CD8-positive, alpha-beta memory T cell (primary cell): ENCODE measurements at regions of chr14 and their contacts with region 1.

Region 1: DNA sequence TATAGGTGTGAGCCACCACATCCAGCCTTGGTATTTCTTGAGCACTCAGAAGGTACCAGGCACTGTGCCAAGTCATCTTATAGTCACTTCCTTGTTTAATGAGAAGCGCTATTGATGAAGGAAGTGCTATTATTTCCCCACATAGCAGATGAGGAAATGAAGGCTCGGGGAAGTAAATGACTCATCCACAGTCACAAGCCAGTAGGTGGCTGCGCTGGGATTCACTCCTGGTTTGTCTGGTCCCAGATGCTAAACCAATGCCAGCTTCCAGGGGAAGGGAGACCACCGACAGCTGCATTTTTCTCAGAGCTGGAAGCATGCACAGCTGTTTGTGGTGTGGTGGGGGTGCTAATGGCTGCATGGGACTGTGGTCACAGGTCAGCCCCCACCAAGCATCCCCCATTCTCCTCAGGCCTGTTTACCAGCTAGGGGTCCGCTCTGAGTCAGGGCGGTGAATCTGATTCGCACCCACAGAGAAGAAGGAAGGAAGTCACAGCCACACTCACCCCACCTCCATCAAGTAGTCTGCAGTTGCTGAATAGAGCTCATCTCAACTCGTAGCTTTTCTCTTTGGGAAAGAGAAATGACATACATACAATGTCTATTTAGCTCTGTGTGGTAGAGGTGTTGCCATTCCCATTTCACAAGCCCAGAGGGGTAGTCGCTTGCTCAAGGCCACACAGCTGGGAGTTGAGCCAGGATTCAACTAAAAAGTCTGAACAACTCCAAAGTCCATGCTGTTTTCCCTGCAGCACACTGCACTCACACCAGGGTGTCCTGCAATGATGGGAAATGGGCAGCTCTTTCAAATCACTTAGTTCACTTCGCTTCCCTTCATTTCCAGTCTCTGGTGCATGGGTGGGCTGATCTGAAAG is 6.3 kb upstream of the LTBP2 start:
- DNase-seq: peak; percentile 60 to 92 (median 71)
- H3K4me3 ChIP-seq: peak overlapping the region; percentile 47
- H3K4me3 Mint-ChIP-seq: peak overlapping the region; percentile 63 to 85 (median 78)
- H3K27ac ChIP-seq: peak overlapping the region; percentile 32
- H3K27ac Mint-ChIP-seq: peak overlapping the region; percentile 91 to 97 (median 94)
- H3K4me1 ChIP-seq: peaks cover 46% of the 10 kb centered on the region
- H3K4me1 Mint-ChIP-seq: peaks cover 78 to 87% (median 79%) of the 10 kb centered on the region in 3 donors
- H3K27me3 ChIP-seq: no peaks in the 10 kb centered on the region
- H3K27me3 Mint-ChIP-seq: peaks cover 0 to 13% of the 10 kb centered on the region in 2 donors

Region 2: GRCh38 chr14:73958591-73958990 is 659.7 kb before region 1 on chr14:
- CTCF ChIA-PET with region 1: no interaction called
- POLR2A ChIA-PET with region 1: no interaction called
- DNase-seq: no peak
- H3K4me3 ChIP-seq: no peak overlapping the region
- H3K4me3 Mint-ChIP-seq: no peak overlapping the region
- H3K27ac ChIP-seq: no peak overlapping the region
- H3K27ac Mint-ChIP-seq: peak overlapping the region in 1 of 8 donors; percentile 42
- H3K4me1 ChIP-seq: no peaks in the 10 kb centered on the region
- H3K4me1 Mint-ChIP-seq: no peaks in the 10 kb centered on the region
- H3K27me3 ChIP-seq: no peaks in the 10 kb centered on the region
- H3K27me3 Mint-ChIP-seq: no peaks in the 10 kb centered on the region

Region 3: GRCh38 chr14:74630881-74631690 is 12.8 kb after region 1 on chr14:
- CTCF ChIA-PET with region 1: interaction called, 20 read pairs
- POLR2A ChIA-PET with region 1: no interaction called
- DNase-seq: no peak
- H3K4me3 ChIP-seq: no peak overlapping the region
- H3K4me3 Mint-ChIP-seq: no peak overlapping the region
- H3K27ac ChIP-seq: no peak overlapping the region
- H3K27ac Mint-ChIP-seq: peak overlapping the region in 1 of 8 donors; percentile 90
- H3K4me1 ChIP-seq: no peaks in the 10 kb centered on the region
- H3K4me1 Mint-ChIP-seq: peaks cover 4 to 12% (median 8%) of the 10 kb centered on the region in 3 donors
- H3K27me3 ChIP-seq: no peaks in the 10 kb centered on the region
- H3K27me3 Mint-ChIP-seq: peaks cover 0 to 3% of the 10 kb centered on the region in 2 donors

Region 4: DNA sequence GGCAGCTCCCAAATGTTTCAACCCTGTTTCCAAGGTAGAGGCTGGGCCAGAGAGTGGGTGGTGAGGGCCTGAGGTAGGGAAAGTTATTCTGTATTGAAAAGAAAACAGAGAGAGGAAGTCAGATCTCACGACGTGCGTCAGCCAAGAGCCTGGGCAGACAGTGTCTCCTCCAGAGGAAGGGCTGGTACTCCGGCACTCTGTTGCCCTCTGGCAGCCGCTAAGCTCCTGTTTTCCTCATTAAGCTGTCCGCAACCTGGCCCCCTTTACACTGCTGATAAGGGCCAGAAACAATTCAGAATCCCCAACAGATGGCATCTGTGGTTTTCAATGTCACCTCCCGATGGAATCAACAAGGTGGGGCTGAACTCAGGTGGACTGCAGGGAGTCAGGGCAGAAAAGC is 19.8 kb after region 1 on chr14:
- CTCF ChIA-PET with region 1: interaction called, 16 read pairs
- POLR2A ChIA-PET with region 1: no interaction called
- DNase-seq: no peak
- H3K4me3 ChIP-seq: no peak overlapping the region
- H3K4me3 Mint-ChIP-seq: no peak overlapping the region
- H3K27ac ChIP-seq: no peak overlapping the region
- H3K27ac Mint-ChIP-seq: peak overlapping the region in 5 of 8 donors; percentile 17 to 90 (median 69)
- H3K4me1 ChIP-seq: no peaks in the 10 kb centered on the region
- H3K4me1 Mint-ChIP-seq: peaks cover 0 to 7% (median 1%) of the 10 kb centered on the region in 3 donors
- H3K27me3 ChIP-seq: no peaks in the 10 kb centered on the region
- H3K27me3 Mint-ChIP-seq: peaks cover 0 to 7% of the 10 kb centered on the region in 2 donors

Region 5: DNA sequence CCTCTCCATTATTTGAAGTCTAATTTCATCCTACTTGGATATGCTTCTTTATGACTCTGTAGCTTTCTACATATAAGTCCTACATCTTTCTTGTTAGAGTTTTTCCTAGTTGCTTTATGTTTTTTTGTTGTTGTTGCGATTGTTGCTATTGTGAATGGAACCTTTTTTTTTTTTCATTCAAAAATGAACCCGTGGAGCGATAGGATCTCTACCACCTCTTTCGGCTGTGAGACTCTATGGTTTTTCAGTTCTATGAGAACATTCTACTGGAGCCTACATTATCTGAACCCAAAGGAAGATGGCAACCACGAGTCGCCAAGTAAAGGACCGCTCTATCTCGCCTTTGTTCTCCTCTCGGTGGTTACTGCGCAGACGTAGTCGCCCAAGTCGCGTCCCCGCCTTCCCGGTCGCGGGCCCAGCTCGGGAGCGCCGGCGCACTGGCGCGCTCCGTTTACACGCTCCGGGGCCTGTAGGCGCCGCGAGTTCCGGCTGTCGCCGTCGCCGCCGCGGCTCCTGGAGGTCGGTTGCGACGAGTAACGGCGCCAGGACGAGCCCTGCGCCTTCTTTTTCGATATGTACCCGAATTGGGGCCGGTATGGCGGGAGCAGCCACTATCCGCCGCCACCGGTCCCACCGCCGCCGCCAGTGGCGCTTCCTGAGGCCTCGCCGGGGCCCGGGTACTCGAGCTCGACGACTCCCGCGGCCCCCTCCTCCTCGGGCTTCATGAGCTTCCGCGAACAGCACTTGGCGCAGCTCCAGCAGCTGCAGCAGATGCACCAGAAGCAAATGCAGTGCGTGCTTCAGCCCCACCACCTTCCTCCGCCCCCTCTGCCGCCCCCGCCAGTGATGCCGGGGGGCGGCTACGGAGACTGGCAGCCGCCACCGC is 144.8 kb after region 1 on chr14 and contains the start of gene YLPM1:
- CTCF ChIA-PET with region 1: interaction called, 19 read pairs
- POLR2A ChIA-PET with region 1: interaction called, 9 read pairs
- DNase-seq: peak; percentile 87 to 96 (median 95)
- H3K4me3 ChIP-seq: peak within 1 kb of the TSS; percentile 72
- H3K4me3 Mint-ChIP-seq: peak within 1 kb of the TSS; percentile 78 to 92 (median 85)
- H3K27ac ChIP-seq: peak within 1 kb of the TSS; percentile 87
- H3K27ac Mint-ChIP-seq: peak within 1 kb of the TSS; percentile 88 to 99 (median 96)
- H3K4me1 ChIP-seq: peaks cover 31% of the 10 kb centered on the region
- H3K4me1 Mint-ChIP-seq: peaks cover 47 to 56% (median 55%) of the 10 kb centered on the region in 3 donors
- H3K27me3 ChIP-seq: no peaks in the 10 kb centered on the region
- H3K27me3 Mint-ChIP-seq: no peaks in the 10 kb centered on the region
- total RNA-seq, gene YLPM1: 52.2 to 53.8 TPM